CD8-positive, alpha-beta T cell (primary cell): ENCODE measurements at regions of chr6 and their contacts with region 1.

Region 1: DNA sequence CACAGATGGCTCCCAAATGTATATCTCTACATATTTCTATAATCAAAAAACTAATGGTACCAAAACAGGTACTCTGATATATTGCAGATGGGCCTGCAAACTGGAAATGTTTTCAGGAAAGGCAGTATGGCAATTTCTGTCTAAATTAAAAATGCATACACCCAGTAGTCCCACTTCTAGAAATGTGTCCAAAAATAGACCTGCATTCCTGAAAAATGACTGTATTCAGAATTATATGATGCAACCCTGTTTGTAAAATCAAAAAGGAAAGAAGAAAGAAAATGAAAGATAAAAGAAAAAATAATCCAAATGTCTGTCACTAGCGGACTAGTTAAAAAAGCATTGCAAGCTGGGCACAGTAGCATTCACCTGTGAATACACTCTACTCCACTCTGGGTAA is 12.9 kb upstream of the MICB start:
- DNase-seq: no peak
- ATAC-seq: no peak
- H3K4me3 ChIP-seq: no peak overlapping the region
- H3K4me3 Mint-ChIP-seq: no peak overlapping the region
- H3K27ac ChIP-seq: no peak overlapping the region
- H3K27ac Mint-ChIP-seq: no peak overlapping the region
- H3K4me1 ChIP-seq: no peaks in the 10 kb centered on the region
- H3K4me1 Mint-ChIP-seq: no peaks in the 10 kb centered on the region
- H3K27me3 ChIP-seq: no peaks in the 10 kb centered on the region
- H3K27me3 Mint-ChIP-seq: no peaks in the 10 kb centered on the region
- CTCF ChIP-seq: no peak

Region 2: GRCh38 chr6:31386977-31387376 is 98.1 kb before region 1 on chr6:
- CTCF ChIA-PET with region 1: no interaction called
- POLR2A ChIA-PET with region 1: no interaction called
- intact Hi-C with region 1: loop called in 1 of 2 experiments (anchors 1 kb)
- DNase-seq: no peak
- ATAC-seq: no peak
- H3K4me3 ChIP-seq: no peak overlapping the region
- H3K4me3 Mint-ChIP-seq: no peak overlapping the region
- H3K27ac ChIP-seq: no peak overlapping the region
- H3K27ac Mint-ChIP-seq: no peak overlapping the region
- H3K4me1 ChIP-seq: no peaks in the 10 kb centered on the region
- H3K4me1 Mint-ChIP-seq: no peaks in the 10 kb centered on the region
- H3K27me3 ChIP-seq: no peaks in the 10 kb centered on the region
- H3K27me3 Mint-ChIP-seq: no peaks in the 10 kb centered on the region
- CTCF ChIP-seq: no peak

Region 3: GRCh38 chr6:31441365-31442267 is 43.4 kb before region 1 on chr6:
- CTCF ChIA-PET with region 1: no interaction called
- POLR2A ChIA-PET with region 1: no interaction called
- intact Hi-C with region 1: no loop called
- DNase-seq: peak in 8 of 9 experiments; percentile 80 to 93 (median 84)
- ATAC-seq: peak; percentile 98
- H3K4me3 ChIP-seq: no peak overlapping the region
- H3K4me3 Mint-ChIP-seq: no peak overlapping the region
- H3K27ac ChIP-seq: no peak overlapping the region
- H3K27ac Mint-ChIP-seq: no peak overlapping the region
- H3K4me1 ChIP-seq: peaks cover 7% of the 10 kb centered on the region
- H3K4me1 Mint-ChIP-seq: peaks cover 5% of the 10 kb centered on the region
- H3K27me3 ChIP-seq: peaks cover 0 to 3% of the 10 kb centered on the region in 2 experiments
- H3K27me3 Mint-ChIP-seq: peaks cover 37% of the 10 kb centered on the region
- CTCF ChIP-seq: peak; percentile 75

Region 4: GRCh38 chr6:31851485-31851832 is 366.4 kb after region 1 on chr6:
- CTCF ChIA-PET with region 1: no interaction called
- POLR2A ChIA-PET with region 1: no interaction called
- intact Hi-C with region 1: no loop called
- DNase-seq: no peak
- ATAC-seq: no peak
- H3K4me3 ChIP-seq: no peak overlapping the region
- H3K4me3 Mint-ChIP-seq: no peak overlapping the region
- H3K27ac ChIP-seq: no peak overlapping the region
- H3K27ac Mint-ChIP-seq: no peak overlapping the region
- H3K4me1 ChIP-seq: no peaks in the 10 kb centered on the region
- H3K4me1 Mint-ChIP-seq: no peaks in the 10 kb centered on the region
- H3K27me3 ChIP-seq: no peaks in the 10 kb centered on the region
- H3K27me3 Mint-ChIP-seq: no peaks in the 10 kb centered on the region
- CTCF ChIP-seq: no peak

Region 5: DNA sequence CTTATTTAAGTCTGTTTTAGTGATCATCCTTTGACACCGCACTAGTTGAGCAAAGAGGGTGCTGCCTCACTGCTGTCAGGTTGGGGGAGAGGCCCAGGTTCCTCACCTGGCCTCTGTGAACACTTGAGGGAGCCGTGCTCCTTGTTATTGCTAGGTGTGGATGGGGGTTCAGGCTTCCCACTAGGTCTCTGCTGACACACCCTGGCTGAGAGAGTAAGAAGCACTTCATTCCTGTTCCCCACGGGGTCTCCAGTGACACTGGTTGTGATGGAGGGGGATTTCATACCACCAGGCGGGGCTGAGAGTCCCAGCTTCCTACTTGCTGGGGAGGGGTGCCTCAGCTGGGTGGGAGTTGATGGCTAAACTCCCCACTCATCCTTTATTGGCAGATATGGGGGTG is 749.9 kb after region 1 on chr6:
- CTCF ChIA-PET with region 1: no interaction called
- POLR2A ChIA-PET with region 1: no interaction called
- intact Hi-C with region 1: no loop called
- DNase-seq: peak in 2 of 9 experiments; percentile 21 to 40
- ATAC-seq: no peak
- H3K4me3 ChIP-seq: no peak overlapping the region
- H3K4me3 Mint-ChIP-seq: no peak overlapping the region
- H3K27ac ChIP-seq: no peak overlapping the region
- H3K27ac Mint-ChIP-seq: no peak overlapping the region
- H3K4me1 ChIP-seq: no peaks in the 10 kb centered on the region
- H3K4me1 Mint-ChIP-seq: peaks cover 2% of the 10 kb centered on the region
- H3K27me3 ChIP-seq: no peaks in the 10 kb centered on the region
- H3K27me3 Mint-ChIP-seq: no peaks in the 10 kb centered on the region
- CTCF ChIP-seq: no peak